Natural killer cell (primary cell): ENCODE measurements at regions of chr17 and their contacts with region 1.

Region 1: GRCh38 chr17:49567871-49568694 is 7.6 kb upstream of the NXPH3 start:
- DNase-seq: peak; percentile 85
- ATAC-seq: peak; percentile 66 to 69 (median 68)
- H3K4me3 ChIP-seq: no peak overlapping the region
- H3K4me3 Mint-ChIP-seq: peak overlapping the region; percentile 59
- H3K27ac ChIP-seq: no peak overlapping the region
- H3K27ac Mint-ChIP-seq: peak overlapping the region in 1 of 2 donors; percentile 8
- H3K4me1 ChIP-seq: peaks cover 32% of the 10 kb centered on the region
- H3K4me1 Mint-ChIP-seq: peaks cover 0 to 30% of the 10 kb centered on the region in 2 donors
- H3K27me3 ChIP-seq: no peaks in the 10 kb centered on the region
- H3K27me3 Mint-ChIP-seq: peaks cover 10 to 28% of the 10 kb centered on the region in 2 donors
- CTCF ChIP-seq: peak; percentile 97

Region 2: DNA sequence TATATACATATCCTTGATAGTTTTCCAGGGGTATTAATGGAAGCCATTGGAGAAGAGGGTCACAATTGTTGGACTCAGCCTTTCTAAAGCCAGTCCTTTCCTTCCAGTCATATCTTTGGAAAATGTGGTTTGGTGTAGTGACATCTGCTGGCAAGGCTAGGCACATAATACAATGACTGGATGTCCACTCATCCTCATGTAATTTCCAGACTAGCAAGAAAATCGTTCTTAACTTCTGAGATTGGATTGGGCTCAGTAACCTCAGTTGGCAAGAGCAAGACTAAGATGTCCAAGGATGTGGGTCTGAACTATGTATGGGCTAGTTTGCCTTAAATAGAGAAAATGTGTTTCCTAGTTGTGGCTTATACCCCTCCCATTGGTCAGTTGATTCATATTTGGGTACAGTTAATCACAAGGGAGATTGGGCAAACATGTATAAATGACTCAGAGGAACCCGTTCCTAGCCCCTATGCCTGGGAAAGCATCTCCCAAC is 211.7 kb after region 1 on chr17:
- intact Hi-C with region 1: loop called (anchors 2 kb)
- DNase-seq: peak in 1 of 2 donors; percentile 67
- ATAC-seq: peak in 1 of 3 donors; percentile 61
- H3K4me3 ChIP-seq: no peak overlapping the region
- H3K4me3 Mint-ChIP-seq: no peak overlapping the region
- H3K27ac ChIP-seq: no peak overlapping the region
- H3K27ac Mint-ChIP-seq: no peak overlapping the region
- H3K4me1 ChIP-seq: no peaks in the 10 kb centered on the region
- H3K4me1 Mint-ChIP-seq: peaks cover 5 to 7% of the 10 kb centered on the region in 2 donors
- H3K27me3 ChIP-seq: no peaks in the 10 kb centered on the region
- H3K27me3 Mint-ChIP-seq: no peaks in the 10 kb centered on the region
- CTCF ChIP-seq: no peak

Region 3: GRCh38 chr17:49851387-49852291 is 283.6 kb after region 1 on chr17:
- intact Hi-C with region 1: loop called (anchors 1 kb)
- DNase-seq: peak; percentile 68 to 83
- ATAC-seq: peak; percentile 75 to 81 (median 79)
- H3K4me3 ChIP-seq: peak overlapping the region; percentile 70
- H3K4me3 Mint-ChIP-seq: peak overlapping the region; percentile 91
- H3K27ac ChIP-seq: peak overlapping the region; percentile 54
- H3K27ac Mint-ChIP-seq: peak overlapping the region; percentile 77 to 93
- H3K4me1 ChIP-seq: peaks cover 18% of the 10 kb centered on the region
- H3K4me1 Mint-ChIP-seq: peaks cover 12 to 16% of the 10 kb centered on the region in 2 donors
- H3K27me3 ChIP-seq: no peaks in the 10 kb centered on the region
- H3K27me3 Mint-ChIP-seq: no peaks in the 10 kb centered on the region
- CTCF ChIP-seq: peak; percentile 74